PC-3 (cell line): ENCODE measurements at regions of chr16 and their contacts with region 1.

Region 1: GRCh38 chr16:24700549-24701392 is 28.7 kb upstream of the TNRC6A start:
- DNase-seq: peak; percentile 97
- ATAC-seq: peak; percentile 99
- H3K4me3 ChIP-seq: peak overlapping the region; percentile 9; the same call in 1 of the 2 replicates
- H3K27ac ChIP-seq: peak overlapping the region; percentile 65
- H3K4me1 ChIP-seq: peaks cover 20% of the 10 kb centered on the region
- H3K27me3 ChIP-seq: no peaks in the 10 kb centered on the region
- CTCF ChIP-seq: 0 out of 2 replicates have a peak, but pooled peaks have one; percentile 30

Region 2: DNA sequence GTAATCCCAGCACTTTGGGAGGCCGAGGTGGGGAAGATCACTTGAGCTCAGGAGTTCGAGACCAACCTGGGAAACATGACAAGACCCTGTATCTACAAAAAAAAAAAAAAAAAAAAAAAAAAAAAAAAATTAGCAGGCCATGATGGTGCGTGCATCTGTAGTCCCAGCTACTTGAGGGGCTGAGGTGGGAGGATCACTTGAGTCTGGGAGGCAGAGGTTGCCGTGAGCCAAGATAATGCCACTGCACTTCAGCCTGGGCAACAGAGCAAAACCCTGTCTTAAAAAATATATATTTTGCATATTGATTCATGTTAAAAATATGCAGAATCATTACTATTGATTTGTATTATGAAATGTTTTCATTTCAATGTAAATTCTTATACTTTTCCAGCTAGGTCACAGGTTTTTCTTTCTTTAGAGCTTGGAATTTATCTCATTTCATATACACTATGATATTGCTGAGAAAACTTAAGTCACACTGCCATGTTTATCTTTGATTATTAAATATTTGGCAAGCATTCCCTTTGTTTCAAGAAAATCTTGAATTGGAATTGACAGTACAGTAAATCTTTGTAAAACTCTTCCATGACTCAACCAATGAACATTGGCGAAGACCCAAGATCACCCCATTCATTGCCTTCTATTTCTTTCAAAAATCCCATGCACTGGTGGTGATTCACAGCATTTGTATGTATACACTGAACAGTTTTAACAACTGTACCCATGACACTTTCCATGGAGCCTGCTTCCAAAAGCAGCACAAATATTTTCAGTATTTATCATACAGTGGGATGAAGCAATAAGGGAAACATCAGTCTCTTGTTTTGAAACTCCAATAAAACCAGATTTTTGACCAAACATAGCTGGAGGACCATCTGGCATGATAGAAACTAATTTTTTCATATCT is 54.8 kb before region 1 on chr16:
- CTCF ChIA-PET with region 1: no interaction called
- POLR2A ChIA-PET with region 1: no interaction called
- intact Hi-C with region 1: loop called (anchors 2 kb)
- DNase-seq: peak; percentile 98
- ATAC-seq: peak; percentile 98
- H3K4me3 ChIP-seq: no peak overlapping the region
- H3K27ac ChIP-seq: peak overlapping the region; percentile 93
- H3K4me1 ChIP-seq: peaks cover 23% of the 10 kb centered on the region
- H3K27me3 ChIP-seq: no peaks in the 10 kb centered on the region
- CTCF ChIP-seq: no peak

Region 3: DNA sequence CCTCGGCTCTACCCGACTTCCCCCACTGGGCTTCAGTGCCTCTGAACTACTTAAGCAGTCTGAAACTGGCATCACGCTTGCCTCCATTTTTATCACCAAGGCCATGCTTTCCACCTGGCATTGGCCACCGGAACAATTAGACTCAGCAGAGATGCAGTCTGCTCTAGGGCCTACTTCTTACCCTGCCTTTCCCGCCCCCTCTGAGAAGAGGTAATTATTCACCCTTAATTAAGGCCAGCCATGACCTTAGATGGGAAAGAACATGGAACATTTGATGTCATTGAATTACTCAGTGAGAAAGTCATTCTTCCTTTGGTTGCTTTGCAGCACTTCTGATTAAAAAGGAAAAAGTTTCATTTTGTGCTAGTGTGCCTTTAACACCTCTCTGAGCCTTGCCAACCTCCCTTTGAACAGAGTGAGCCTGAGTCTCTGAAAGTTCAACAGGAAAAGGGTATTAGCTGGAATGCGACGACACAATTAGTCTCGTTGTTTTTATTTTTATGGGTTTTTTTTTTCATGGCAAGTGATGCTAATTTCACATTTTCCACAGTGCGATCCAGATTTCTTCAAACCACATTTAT is 32.2 kb before region 1 on chr16:
- CTCF ChIA-PET with region 1: no interaction called
- POLR2A ChIA-PET with region 1: no interaction called
- intact Hi-C with region 1: loop called (anchors 2 kb)
- DNase-seq: no peak
- ATAC-seq: no peak
- H3K4me3 ChIP-seq: no peak overlapping the region
- H3K27ac ChIP-seq: peak overlapping the region; percentile 69
- H3K4me1 ChIP-seq: peaks cover 7% of the 10 kb centered on the region
- H3K27me3 ChIP-seq: no peaks in the 10 kb centered on the region
- CTCF ChIP-seq: no peak

Region 4: GRCh38 chr16:24729362-24729984 is 28.7 kb after region 1 on chr16 and contains the start of gene TNRC6A:
- CTCF ChIA-PET with region 1: no interaction called
- POLR2A ChIA-PET with region 1: no interaction called
- intact Hi-C with region 1: loop called (anchors 2 kb)
- DNase-seq: peak; percentile 74
- ATAC-seq: peak; percentile 87
- H3K4me3 ChIP-seq: peak within 1 kb of the TSS; percentile 75
- H3K27ac ChIP-seq: peak within 1 kb of the TSS; percentile 71
- H3K4me1 ChIP-seq: peaks cover 15% of the 10 kb centered on the region
- H3K27me3 ChIP-seq: no peaks in the 10 kb centered on the region
- CTCF ChIP-seq: no peak
- total RNA-seq, gene TNRC6A: 16.2 and 20.3 TPM in 2 replicates